Sciatic nerve (tissue), 2 donors: ENCODE measurements at regions of chr4 and their contacts with region 1.

Region 1: DNA sequence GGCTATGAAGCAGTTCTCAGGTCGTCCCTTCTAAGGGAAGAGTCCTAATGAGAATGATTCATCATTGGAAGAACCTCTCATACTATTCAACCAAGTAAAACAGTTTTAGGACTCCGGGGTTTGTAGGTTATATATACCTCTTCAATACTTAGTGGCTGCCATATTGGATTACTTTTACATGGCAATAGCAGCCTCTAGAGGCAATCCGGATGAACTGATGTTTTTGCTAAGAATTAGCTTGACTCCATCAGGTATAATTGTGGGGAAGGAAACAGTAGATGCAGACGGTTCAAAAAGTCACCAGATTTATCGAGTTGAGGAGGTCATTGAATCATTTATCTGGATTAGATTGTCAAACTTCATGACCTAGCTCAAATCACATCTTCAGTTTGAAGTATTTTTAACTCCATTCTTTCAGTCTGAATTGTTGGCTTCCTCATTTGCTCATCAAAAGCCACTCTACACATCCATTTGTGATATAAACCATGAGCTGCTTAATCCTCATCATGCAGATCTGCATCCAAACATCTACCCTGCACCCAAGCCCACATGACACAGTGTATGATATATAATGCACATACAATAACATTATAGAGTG is 28.4 kb downstream of the GUCY1B1 start:
- DNase-seq: no peak
- ATAC-seq: peak; percentile 83

Region 2: GRCh38 chr4:154595807-154596206 is 1191.4 kb before region 1 on chr4:
- intact Hi-C with region 1: loop called (anchors 5 kb)
- DNase-seq: no peak
- ATAC-seq: no peak

Region 3: GRCh38 chr4:155442267-155443105 is 344.7 kb before region 1 on chr4:
- intact Hi-C with region 1: loop called (anchors 10 kb)
- DNase-seq: peak; percentile 88
- ATAC-seq: peak; percentile 93